CD8-positive, alpha-beta memory T cell (primary cell): ENCODE measurements at regions of chr4 and their contacts with region 1.

Region 1: DNA sequence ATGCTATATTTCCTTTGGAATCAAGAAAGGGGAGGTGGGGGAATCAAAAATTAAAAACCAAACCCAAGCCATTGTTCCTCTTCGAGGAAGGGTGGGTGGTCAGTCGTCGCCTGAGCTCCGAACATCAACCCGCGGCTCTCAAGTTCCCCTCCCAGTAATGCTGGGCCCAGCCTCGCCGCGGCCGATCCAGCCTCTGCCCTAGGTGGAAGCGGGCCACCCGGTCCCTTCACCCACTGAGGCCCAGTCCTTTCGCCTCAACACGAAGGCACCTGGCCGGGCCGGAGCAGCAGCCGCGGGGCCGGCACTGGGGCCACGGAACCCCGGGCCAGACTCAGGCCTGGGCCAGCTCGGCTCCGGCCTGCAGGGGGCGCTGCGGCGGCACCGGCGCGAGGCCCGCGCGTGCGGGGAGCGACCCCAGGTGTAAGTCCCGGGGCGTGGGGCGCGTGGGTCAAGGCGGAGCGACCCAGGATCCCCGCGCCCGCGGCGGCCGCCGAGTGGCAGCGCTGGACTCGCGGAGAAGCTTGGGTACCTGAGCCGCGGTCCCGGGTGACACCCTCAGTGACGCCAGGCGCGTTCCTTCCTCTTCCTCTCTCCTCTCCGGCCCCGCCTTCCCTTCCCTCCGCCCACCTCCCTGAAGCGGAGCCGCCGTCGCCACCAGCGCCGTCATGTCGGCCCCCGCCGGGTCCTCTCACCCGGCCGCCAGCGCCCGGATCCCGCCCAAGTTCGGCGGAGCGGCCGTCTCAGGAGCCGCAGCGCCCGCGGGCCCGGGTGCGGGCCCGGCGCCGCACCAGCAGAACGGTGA is at the start of gene SEC24B:
- DNase-seq: peak; percentile 87 to 92 (median 90)
- H3K4me3 ChIP-seq: peak within 1 kb of the TSS; percentile 83
- H3K4me3 Mint-ChIP-seq: peak within 1 kb of the TSS; percentile 87 to 96 (median 90)
- H3K27ac ChIP-seq: peak within 1 kb of the TSS; percentile 73
- H3K27ac Mint-ChIP-seq: peak within 1 kb of the TSS; percentile 91 to 97 (median 94)
- H3K4me1 ChIP-seq: peaks cover 51% of the 10 kb centered on the region
- H3K4me1 Mint-ChIP-seq: peaks cover 47 to 55% (median 54%) of the 10 kb centered on the region in 3 donors
- H3K27me3 ChIP-seq: no peaks in the 10 kb centered on the region
- H3K27me3 Mint-ChIP-seq: peaks cover 0 to 2% of the 10 kb centered on the region in 2 donors
- total RNA-seq, gene SEC24B: 27.7 to 29.5 TPM

Region 2: GRCh38 chr4:109574102-109574850 is 140.9 kb after region 1 on chr4:
- CTCF ChIA-PET with region 1: interaction called, 18 read pairs
- POLR2A ChIA-PET with region 1: no interaction called
- DNase-seq: peak in 1 of 5 donors; percentile 26
- H3K4me3 ChIP-seq: no peak overlapping the region
- H3K4me3 Mint-ChIP-seq: peak overlapping the region in 6 of 7 donors; percentile 8 to 42 (median 32)
- H3K27ac ChIP-seq: no peak overlapping the region
- H3K27ac Mint-ChIP-seq: peak overlapping the region; percentile 7 to 88 (median 45)
- H3K4me1 ChIP-seq: peaks cover 54% of the 10 kb centered on the region
- H3K4me1 Mint-ChIP-seq: peaks cover 60 to 84% (median 76%) of the 10 kb centered on the region in 3 donors
- H3K27me3 ChIP-seq: no peaks in the 10 kb centered on the region
- H3K27me3 Mint-ChIP-seq: no peaks in the 10 kb centered on the region

Region 3: DNA sequence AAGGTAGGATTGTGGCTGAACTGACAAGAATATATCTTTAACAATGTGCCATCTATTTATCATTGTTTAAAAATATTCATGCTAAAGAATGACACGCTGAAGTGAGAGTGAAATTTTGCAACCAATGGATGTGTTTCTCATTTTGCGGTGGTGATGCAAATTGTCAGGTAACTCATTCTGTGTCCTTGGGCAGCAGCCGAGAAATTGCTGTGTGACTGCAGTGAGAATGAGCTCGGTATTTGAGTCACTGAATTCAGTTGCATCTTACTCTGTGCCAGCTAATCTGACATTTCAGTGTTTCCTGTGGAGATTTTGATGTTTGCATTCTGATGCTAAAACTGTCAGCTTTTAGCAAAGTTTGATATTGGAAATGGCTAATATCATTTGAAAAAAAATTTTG is 154.8 kb after region 1 on chr4:
- CTCF ChIA-PET with region 1: no interaction called
- POLR2A ChIA-PET with region 1: no interaction called
- DNase-seq: no peak
- H3K4me3 ChIP-seq: peak overlapping the region; percentile 21
- H3K4me3 Mint-ChIP-seq: peak overlapping the region in 2 of 7 donors; percentile 44 to 60
- H3K27ac ChIP-seq: no peak overlapping the region
- H3K27ac Mint-ChIP-seq: peak overlapping the region in 7 of 8 donors; percentile 8 to 61 (median 40)
- H3K4me1 ChIP-seq: peaks cover 40% of the 10 kb centered on the region
- H3K4me1 Mint-ChIP-seq: peaks cover 77 to 98% (median 81%) of the 10 kb centered on the region in 3 donors
- H3K27me3 ChIP-seq: no peaks in the 10 kb centered on the region
- H3K27me3 Mint-ChIP-seq: no peaks in the 10 kb centered on the region